AG04449 (cell line): ENCODE measurements at regions of chr2 and their contacts with region 1.

Region 1: DNA sequence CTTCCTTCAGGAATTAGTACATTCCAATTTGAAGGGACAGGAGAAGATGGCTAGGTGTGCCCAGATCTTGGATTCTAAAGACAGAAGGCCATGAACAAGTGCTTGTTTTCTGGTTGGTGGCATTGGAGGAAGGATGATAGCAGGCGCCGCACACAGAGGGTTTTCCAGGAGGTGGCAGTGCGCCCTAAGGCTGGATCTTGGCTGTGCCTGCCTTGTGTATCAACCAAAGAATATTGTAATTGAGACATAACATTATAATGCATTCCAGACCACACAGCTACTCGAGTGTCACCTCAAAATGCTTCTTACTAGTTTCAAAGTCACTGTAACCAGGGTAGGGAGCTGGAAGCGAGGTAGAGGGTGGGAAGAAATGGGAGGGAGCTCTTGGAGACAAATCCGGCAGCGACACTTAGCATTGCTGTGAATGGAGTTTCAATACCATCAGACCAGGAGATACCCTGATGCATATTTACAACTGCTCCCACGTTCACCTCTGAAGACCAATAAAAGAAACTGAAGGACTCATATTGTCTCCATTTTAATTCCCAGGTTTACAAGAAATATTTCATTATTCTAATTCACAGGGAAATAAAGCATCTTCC is 42.5 kb downstream of the CPO start:
- DNase-seq: no peak
- H3K4me3 ChIP-seq: no peak overlapping the region
- CTCF ChIP-seq: peak; percentile 89

Region 2: DNA sequence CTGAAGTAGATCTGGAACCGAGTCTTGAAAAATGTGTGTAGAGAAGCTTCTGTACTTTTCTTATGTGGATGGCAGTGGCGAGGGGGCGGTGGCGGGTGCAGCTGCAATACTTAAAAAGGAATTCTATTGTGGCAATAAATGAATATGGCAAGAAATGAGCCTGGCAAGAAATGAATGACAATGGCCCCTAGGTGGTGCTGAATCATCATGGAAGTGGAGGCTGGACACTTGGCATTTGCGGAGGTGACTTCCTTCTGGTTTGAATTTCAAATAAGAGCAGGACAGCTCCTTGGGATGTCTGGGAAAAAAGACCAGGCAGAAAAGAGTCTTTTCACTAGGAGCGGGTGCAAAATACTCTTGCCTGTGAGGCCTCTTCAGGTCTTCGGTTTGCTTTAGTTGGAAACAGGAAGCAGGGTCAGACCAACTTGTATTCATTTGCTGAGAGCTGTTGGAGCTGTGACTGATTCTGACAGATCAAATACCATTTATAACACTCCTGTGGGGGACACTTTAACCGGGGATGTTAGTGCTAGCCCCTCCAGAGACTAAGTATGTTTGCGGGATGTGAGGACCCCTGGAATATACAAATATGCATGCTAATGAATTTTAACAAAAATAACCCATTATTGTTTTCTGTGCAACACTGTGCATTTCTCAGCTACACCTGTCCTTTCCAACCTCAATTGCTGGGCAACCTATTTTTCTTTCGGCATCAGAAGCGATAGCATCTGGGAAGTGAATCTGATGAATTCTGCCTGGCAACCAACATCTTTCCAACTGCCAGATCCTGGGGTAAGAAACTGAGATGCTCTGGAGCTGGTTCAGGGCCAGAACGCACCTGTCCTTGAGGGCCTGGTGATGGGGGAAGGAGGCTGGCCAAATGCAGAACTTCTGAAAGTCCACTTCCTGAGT is 181.1 kb before region 1 on chr2:
- CTCF ChIA-PET with region 1: interaction called, 26 read pairs
- POLR2A ChIA-PET with region 1: no interaction called
- DNase-seq: peak; percentile 38
- H3K4me3 ChIP-seq: no peak overlapping the region
- CTCF ChIP-seq: peak; percentile 68

Region 3: GRCh38 chr2:206958261-206958660 is 23.6 kb before region 1 on chr2:
- CTCF ChIA-PET with region 1: no interaction called
- POLR2A ChIA-PET with region 1: no interaction called
- DNase-seq: no peak
- H3K4me3 ChIP-seq: no peak overlapping the region
- CTCF ChIP-seq: no peak

Region 4: DNA sequence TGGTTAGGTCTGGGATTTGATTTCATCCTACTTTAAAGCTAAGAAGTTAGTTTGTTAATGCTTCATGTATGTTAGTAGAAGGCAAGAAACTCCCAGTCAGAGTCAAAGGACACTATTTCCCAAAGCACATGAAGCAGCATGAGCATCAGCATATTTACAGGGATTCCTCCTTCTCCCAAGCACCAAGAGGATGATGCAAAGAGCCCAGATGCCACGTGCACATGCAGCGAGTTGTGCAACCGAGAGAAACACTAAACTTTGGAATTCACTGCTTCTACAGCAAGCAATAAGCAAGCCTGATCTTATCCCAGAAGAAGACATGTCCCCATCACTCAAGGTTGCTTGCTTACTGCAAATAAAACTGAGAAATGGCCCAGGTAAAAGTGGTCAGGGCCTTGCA is 10.0 kb before region 1 on chr2:
- CTCF ChIA-PET with region 1: interaction called, 21 read pairs
- POLR2A ChIA-PET with region 1: no interaction called
- DNase-seq: peak; percentile 50
- H3K4me3 ChIP-seq: no peak overlapping the region
- CTCF ChIP-seq: no peak

Region 5: DNA sequence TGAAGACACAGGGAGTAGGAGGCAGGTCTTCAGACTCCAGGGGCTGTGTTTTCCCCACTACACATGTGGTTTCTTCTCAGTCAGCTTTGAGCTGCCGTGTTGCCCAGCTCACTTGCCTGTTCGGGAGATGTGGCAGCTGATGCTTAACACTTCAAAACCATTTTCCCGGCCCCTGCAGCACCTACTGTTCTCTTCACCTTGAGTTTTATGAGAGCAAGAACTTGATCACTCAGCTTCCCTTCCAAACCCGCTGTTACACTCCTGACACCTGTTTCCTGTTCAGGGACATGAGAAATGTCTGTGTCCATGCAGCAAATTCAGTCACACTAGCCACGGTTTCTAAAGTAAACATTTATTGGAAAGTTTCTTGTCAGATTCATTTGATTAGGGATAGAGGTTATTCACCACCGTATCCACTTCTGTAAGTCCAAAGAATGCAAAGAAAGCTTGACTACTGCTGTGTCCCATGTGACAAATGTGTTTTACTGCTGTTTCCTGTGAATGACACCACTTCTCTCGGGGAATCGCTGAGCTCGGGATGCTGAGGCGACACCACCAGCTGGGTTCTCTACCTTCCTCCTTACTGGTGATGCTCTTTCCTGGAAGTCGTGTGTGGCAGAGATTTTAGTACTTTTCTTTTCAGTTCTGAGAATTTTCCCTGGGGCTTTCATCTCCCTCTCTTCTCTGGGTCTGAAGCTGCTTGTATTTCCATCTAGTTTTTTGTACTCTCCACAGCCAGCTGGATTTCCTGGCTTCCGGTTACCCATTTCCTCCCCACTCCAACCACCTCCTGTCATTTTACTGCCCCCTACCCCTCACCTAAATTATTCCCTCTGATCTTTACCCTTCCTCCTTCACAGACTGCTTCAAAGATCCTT is 92.2 kb after region 1 on chr2:
- CTCF ChIA-PET with region 1: interaction called, 16 read pairs
- POLR2A ChIA-PET with region 1: no interaction called
- DNase-seq: no peak
- H3K4me3 ChIP-seq: no peak overlapping the region
- CTCF ChIP-seq: no peak

Region 6: GRCh38 chr2:207291625-207292252 is 309.9 kb after region 1 on chr2:
- CTCF ChIA-PET with region 1: no interaction called
- POLR2A ChIA-PET with region 1: no interaction called
- DNase-seq: no peak
- H3K4me3 ChIP-seq: no peak overlapping the region
- CTCF ChIP-seq: no peak